Cardiac septum (tissue), 1 donor: ENCODE measurements at regions of chr1 and their contacts with region 1.

Region 1: GRCh38 chr1:3564921-3565827 is 46.1 kb downstream of the MEGF6 start:
- DNase-seq: no peak

Region 2: DNA sequence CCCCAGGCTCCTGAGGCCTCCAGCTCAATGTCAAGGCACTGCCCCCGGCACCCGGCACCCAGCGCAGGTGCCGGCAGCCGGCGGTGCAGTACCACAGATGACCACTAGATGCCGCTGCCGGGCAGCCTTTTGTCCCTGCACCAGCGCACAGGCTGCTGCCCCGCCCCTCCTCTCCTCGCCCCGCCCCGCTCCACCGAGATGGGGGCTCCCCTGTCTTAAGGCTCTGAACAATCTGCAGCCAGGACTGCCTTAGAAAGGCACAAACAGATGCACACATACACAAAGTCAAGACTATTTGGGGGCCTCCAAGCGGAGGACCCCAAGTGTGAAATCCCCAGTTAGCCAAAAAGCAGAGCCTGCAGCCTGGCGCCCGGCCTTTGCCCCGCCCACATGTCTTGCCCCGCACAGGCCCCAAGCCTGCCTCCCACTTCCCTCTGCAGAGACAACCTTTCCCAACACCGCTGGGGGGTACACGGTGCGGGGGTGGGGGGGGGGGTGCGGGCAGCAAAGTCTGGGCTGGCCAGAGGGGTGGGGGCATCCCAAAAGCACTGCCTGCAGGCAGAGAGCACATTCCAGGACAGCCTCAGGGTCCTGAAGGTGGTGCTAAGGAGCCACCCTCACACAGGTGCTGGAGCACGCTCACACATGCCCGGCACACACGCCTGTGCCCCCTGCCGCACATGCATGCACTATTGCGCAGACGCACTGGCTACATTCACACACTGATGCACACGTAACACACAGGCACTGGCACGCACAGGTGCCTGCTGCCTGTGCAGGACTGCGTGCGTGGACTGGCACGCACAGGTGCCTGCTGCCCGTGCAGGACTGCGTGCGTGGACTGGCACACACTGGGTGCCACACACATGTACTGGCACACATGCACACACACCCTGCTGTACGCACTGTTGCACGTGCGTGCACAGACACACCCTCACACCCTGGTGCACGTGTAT is 73.6 kb before region 1 on chr1:
- intact Hi-C with region 1: loop called (anchors 5 kb)
- DNase-seq: peak; percentile 85

Region 3: GRCh38 chr1:3727042-3727824 is 162.1 kb after region 1 on chr1:
- intact Hi-C with region 1: loop called (anchors 2 kb)
- DNase-seq: no peak